Kidney (tissue), 22 donors: ENCODE measurements at regions of chr15 and their contacts with region 1.

Region 1: GRCh38 chr15:57859130-57859685 is 152.7 kb downstream of the POLR2M start:
- DNase-seq: no peak
- H3K4me3 ChIP-seq: no peak overlapping the region
- H3K27ac ChIP-seq: no peak overlapping the region
- H3K4me1 ChIP-seq: no peaks in the 10 kb centered on the region
- H3K27me3 ChIP-seq: no peaks in the 10 kb centered on the region
- CTCF ChIP-seq: no peak

Region 2: GRCh38 chr15:57654153-57654852 is 204.9 kb before region 1 on chr15:
- intact Hi-C with region 1: loop called (anchors 10 kb)
- DNase-seq: peak in 2 of 5 donors; percentile 89 to 90
- H3K4me3 ChIP-seq: no peak overlapping the region
- H3K27ac ChIP-seq: no peak overlapping the region
- H3K4me1 ChIP-seq: peaks cover 0 to 11% (median 2%) of the 10 kb centered on the region in 3 donors
- H3K27me3 ChIP-seq: no peaks in the 10 kb centered on the region
- CTCF ChIP-seq: no peak

Region 3: DNA sequence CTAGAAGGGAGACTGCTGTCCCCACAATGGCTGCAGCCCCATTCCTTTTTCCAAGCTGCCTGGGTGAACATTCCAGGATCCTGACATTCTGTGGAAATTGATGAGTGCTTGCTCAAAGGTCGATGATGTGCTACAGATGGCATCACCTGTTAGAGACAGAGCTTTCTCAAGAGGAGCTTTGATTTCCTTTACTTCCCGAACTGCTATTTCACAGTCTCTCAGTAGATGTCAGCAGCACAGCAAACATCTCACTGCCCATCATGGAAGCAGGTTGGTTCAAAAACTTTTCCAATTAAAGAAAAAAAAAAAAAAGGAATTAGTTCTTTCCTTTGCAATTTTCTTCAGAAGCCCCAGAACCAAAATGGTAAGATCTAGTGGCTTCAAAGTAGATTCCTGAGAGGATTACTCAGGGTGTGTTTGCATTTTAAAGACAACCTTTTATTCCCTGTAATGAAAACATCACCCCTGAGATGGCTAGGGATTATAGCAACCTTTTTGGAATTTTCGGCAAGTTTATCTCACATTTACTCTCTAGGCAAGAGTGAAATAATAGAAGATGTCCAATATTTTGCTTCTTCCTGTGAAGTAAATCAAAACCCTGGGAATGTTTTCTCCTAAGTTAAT is 107.9 kb before region 1 on chr15:
- intact Hi-C with region 1: loop called (anchors 10 kb)
- DNase-seq: peak in 3 of 5 donors; percentile 34 to 80 (median 66)
- H3K4me3 ChIP-seq: no peak overlapping the region
- H3K27ac ChIP-seq: no peak overlapping the region
- H3K4me1 ChIP-seq: no peaks in the 10 kb centered on the region
- H3K27me3 ChIP-seq: no peaks in the 10 kb centered on the region
- CTCF ChIP-seq: peak; percentile 57

Region 4: DNA sequence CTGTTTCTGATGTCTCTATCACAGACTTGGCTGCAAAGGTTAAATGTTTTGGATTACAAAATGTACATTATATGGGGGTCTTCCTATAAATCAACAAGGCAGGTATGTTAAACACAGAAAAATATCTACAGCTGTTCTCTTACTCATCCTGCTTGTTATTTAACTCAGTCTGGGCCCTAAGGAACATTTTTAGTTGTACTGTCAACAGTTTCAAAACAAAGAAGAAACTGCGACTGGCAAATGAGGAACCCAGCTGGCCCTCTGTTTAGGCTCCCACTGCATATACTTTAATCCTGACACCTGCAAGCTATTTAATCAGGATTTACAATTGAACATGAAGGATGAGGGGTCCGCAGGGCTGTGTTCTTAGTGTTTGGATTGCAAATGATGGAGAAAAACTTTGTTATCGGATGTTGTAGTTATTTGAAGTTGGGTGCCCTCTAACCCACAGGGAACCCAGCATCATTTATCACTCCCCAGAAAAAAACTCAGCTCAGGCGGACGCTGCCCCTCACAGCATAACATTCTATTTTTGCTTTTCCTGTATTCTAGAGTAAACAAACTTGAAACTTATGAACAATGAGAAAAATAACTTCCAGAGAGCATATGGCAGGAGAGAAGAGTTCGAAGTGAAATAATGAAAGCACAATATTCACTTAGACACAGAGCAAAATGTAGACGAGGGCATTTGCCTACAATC is 61.5 kb before region 1 on chr15:
- intact Hi-C with region 1: no loop called
- DNase-seq: peak in 2 of 5 donors; percentile 31 to 54
- H3K4me3 ChIP-seq: no peak overlapping the region
- H3K27ac ChIP-seq: peak overlapping the region; percentile 55 to 78
- H3K4me1 ChIP-seq: peaks cover 0 to 6% (median 4%) of the 10 kb centered on the region in 3 donors
- H3K27me3 ChIP-seq: no peaks in the 10 kb centered on the region
- CTCF ChIP-seq: no peak